MCF 10A (cell line): ENCODE measurements at regions of chr6 and their contacts with region 1.

Region 1: GRCh38 chr6:37018198-37019064 is 13.0 kb downstream of the FGD2 start:
- DNase-seq: peak; percentile 87
- H3K4me3 Mint-ChIP-seq: no peak overlapping the region
- H3K27ac Mint-ChIP-seq: no peak overlapping the region
- H3K4me1 Mint-ChIP-seq: peaks cover 26% of the 10 kb centered on the region
- H3K27me3 Mint-ChIP-seq: no peaks in the 10 kb centered on the region
- CTCF ChIP-seq: peak; percentile 72

Region 2: DNA sequence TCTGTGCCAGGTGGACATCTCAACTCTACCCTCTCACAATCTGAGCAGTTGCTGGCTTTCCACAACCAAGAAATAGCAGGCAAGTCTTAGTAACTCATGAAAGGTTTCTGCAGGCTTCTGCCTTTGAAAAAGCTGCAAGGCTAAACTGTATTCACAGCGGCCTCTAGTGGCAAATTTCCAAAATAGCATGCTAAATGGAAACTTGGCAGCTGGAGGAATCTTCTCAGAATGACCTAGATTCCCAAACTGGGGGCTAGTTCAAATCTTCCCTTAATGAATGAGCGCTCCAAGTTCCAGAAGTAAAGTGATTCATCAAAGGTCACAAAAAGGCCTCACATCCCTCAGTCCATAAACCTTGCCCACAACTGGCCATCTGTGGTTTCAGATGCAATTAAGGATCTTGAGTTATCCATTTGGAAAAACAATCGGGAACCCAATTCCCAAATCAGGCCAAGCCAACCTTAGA is 167.2 kb before region 1 on chr6:
- CTCF ChIA-PET with region 1: interaction called, 13 read pairs
- POLR2A ChIA-PET with region 1: interaction called, 4 read pairs
- intact Hi-C with region 1: loop called (anchors 1 kb)
- DNase-seq: peak; percentile 74
- H3K4me3 Mint-ChIP-seq: no peak overlapping the region
- H3K27ac Mint-ChIP-seq: no peak overlapping the region
- H3K4me1 Mint-ChIP-seq: peaks cover 17% of the 10 kb centered on the region
- H3K27me3 Mint-ChIP-seq: no peaks in the 10 kb centered on the region
- CTCF ChIP-seq: peak; percentile 83

Region 3: DNA sequence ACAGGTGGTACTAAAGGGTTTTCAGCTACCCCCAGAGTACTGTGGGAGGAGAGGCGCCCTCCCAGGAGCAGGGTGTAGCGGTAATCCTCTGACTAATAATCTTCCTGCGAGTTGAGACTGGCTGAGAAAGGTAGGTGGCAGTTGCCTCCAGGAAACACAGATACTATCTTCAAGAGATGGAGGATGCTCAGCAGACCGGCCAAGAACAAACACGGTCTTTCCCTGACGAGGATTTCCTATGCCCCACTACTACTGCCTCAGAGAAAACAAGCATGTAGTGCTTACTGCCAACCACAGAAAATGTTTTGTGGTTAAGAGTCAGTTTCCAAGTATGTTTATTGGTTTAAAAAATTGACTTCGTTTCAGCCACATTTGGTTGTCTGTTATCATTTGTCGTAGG is 105.8 kb before region 1 on chr6:
- CTCF ChIA-PET with region 1: interaction called, 15 read pairs
- POLR2A ChIA-PET with region 1: interaction called, 3 read pairs
- intact Hi-C with region 1: loop called (anchors 1 kb)
- DNase-seq: peak; percentile 76
- H3K4me3 Mint-ChIP-seq: no peak overlapping the region
- H3K27ac Mint-ChIP-seq: no peak overlapping the region
- H3K4me1 Mint-ChIP-seq: peaks cover 27% of the 10 kb centered on the region
- H3K27me3 Mint-ChIP-seq: no peaks in the 10 kb centered on the region
- CTCF ChIP-seq: no peak

Region 4: GRCh38 chr6:37029249-37029971 is 11.0 kb after region 1 on chr6:
- CTCF ChIA-PET with region 1: interaction called, 65 read pairs
- POLR2A ChIA-PET with region 1: interaction called, 3 read pairs
- intact Hi-C with region 1: no loop called
- DNase-seq: peak; percentile 78
- H3K4me3 Mint-ChIP-seq: no peak overlapping the region
- H3K27ac Mint-ChIP-seq: peak overlapping the region; percentile 9
- H3K4me1 Mint-ChIP-seq: peaks cover 20% of the 10 kb centered on the region
- H3K27me3 Mint-ChIP-seq: no peaks in the 10 kb centered on the region
- CTCF ChIP-seq: peak; percentile 58

Region 5: DNA sequence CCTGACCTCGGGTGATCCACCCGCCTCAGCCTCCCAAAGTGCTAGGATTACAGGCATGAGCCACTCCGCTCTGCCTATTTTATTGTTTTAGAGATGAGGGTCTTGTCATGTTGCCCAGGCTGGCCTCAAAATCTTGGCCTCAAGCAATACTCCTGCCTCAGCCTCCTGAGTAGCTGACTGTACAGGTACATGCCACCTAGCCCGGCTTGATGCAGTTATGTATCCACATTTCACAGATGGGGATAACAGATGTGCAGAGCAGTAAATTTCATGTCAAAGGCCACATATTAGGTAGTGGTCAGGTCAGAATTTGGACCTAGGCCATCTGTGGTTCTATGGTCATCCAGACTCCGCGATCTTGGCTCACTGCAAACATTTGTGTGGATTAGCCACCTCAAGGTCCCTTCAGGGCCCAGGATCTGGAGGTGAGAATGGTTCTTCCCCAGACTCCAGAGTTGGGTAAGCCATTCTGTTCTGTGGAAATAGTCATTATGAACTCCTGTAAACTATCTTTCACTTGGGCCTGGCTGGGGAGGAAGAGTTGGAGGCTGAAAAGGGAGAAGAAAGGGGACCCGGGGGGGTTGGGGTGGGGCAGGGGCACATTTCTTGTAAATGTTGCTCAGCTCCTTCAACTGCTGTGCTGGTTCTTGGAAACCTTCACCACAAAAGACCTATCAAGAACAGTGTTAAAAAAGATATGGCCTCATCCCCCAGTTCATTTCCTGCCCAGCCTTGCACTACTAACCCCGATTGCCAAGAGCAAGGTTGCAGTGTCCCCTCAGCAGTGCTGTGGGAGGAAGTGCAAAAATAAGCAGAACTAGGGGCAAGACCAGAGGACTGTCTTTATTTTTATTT is 164.5 kb after region 1 on chr6:
- CTCF ChIA-PET with region 1: interaction called, 359 read pairs
- POLR2A ChIA-PET with region 1: no interaction called
- intact Hi-C with region 1: no loop called
- DNase-seq: no peak
- H3K4me3 Mint-ChIP-seq: no peak overlapping the region
- H3K27ac Mint-ChIP-seq: no peak overlapping the region
- H3K4me1 Mint-ChIP-seq: no peaks in the 10 kb centered on the region
- H3K27me3 Mint-ChIP-seq: no peaks in the 10 kb centered on the region
- CTCF ChIP-seq: no peak

Region 6: DNA sequence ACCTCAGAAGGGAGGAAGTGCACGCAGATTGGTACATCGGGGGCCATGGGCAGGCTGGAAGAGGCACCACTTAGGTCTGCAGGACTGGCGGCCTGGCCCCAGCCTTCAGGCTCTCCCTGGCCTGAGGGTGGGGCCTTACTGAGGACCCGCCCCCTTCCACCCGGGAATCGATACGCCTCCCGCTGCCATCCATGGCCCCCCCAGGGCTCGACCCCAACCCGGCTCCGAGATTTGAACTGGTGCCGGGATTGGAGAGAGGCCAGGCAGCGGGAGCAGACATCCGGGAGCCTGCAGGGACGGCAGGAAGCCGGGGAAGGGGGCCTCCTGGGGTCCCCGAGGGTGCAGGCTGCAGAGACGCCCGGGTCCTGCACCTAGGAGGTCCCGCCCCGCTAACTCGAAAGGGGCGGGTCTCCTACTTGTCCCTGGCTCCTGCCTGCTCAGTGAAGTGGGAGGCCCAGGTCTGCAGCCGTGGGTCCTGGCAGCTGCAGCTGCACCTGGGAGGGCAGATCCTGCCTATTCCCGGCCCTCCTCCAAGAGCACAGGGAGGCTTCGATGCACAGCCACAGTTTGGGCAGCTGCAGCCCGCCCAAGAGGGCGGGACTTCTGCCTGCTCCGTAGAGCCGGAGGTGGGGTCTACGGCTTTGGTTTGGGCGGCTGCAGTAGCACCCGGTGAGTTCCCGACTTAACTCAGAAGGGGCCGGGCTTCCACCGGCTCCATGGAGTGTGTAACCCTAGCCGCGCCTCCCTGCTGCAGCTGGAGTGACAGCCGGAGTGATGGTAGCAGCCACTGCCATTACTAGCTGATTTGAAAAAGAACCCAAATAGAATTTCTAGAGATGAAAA is 203.9 kb after region 1 on chr6:
- CTCF ChIA-PET with region 1: interaction called, 12 read pairs
- POLR2A ChIA-PET with region 1: no interaction called
- intact Hi-C with region 1: no loop called
- DNase-seq: peak; percentile 92
- H3K4me3 Mint-ChIP-seq: peak overlapping the region; percentile 64
- H3K27ac Mint-ChIP-seq: no peak overlapping the region
- H3K4me1 Mint-ChIP-seq: peaks cover 7% of the 10 kb centered on the region
- H3K27me3 Mint-ChIP-seq: no peaks in the 10 kb centered on the region
- CTCF ChIP-seq: no peak

Region 7: DNA sequence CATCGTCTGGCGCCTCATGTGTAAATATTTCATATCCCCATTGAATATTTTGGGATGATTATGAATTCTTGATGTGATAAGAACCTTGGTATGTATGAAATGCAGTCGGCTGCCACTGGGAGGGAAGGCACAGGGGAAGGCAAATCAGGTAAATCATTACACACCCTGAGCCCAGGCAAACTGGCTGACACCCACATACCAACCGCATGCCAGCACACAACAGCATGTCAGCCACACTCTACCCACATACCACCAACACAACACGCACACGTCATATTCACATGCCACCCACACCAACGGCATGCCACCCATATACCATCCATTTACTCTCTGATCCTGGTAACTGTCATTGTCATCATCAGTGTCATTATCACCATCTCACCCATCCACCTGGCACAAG is 707.5 kb after region 1 on chr6:
- CTCF ChIA-PET with region 1: no interaction called
- POLR2A ChIA-PET with region 1: no interaction called
- intact Hi-C with region 1: no loop called
- DNase-seq: no peak
- H3K4me3 Mint-ChIP-seq: no peak overlapping the region
- H3K27ac Mint-ChIP-seq: no peak overlapping the region
- H3K4me1 Mint-ChIP-seq: no peaks in the 10 kb centered on the region
- H3K27me3 Mint-ChIP-seq: peaks cover 19% of the 10 kb centered on the region
- CTCF ChIP-seq: no peak

Region 8: GRCh38 chr6:37940074-37940847 is 921.8 kb after region 1 on chr6:
- CTCF ChIA-PET with region 1: no interaction called
- POLR2A ChIA-PET with region 1: no interaction called
- intact Hi-C with region 1: no loop called
- DNase-seq: peak; percentile 11
- H3K4me3 Mint-ChIP-seq: no peak overlapping the region
- H3K27ac Mint-ChIP-seq: no peak overlapping the region
- H3K4me1 Mint-ChIP-seq: no peaks in the 10 kb centered on the region
- H3K27me3 Mint-ChIP-seq: no peaks in the 10 kb centered on the region
- CTCF ChIP-seq: no peak